ENCODE measurements at regions of chr1 and their contacts with region 1.

Region 1: GRCh38 chr1:155001675-155002463 is 733 bp upstream of the ZBTB7B start:
- DNase-seq: peak; percentile 98
- H3K4me3 ChIP-seq: peak overlapping the region; percentile 71
- H3K27ac ChIP-seq: peak overlapping the region; percentile 92
- H3K4me1 ChIP-seq: peaks cover 65% of the 10 kb centered on the region
- CTCF ChIP-seq: peak; percentile 74

Region 2: GRCh38 chr1:154784924-154785531 is 216.8 kb before region 1 on chr1:
- CTCF ChIA-PET with region 1: no interaction called
- POLR2A ChIA-PET with region 1: no interaction called
- intact Hi-C with region 1: no loop called
- DNase-seq: peak; percentile 54
- H3K4me3 ChIP-seq: no peak overlapping the region
- H3K27ac ChIP-seq: peak overlapping the region; percentile 30
- H3K4me1 ChIP-seq: peaks cover 19% of the 10 kb centered on the region
- CTCF ChIP-seq: no peak

Region 3: GRCh38 chr1:154955718-154956543 is 45.9 kb before region 1 on chr1 and contains the start of gene PBXIP1:
- CTCF ChIA-PET with region 1: interaction called, 11 read pairs
- POLR2A ChIA-PET with region 1: interaction called, 4 read pairs
- intact Hi-C with region 1: loop called (anchors 1 kb)
- DNase-seq: peak; percentile 92
- H3K4me3 ChIP-seq: peak within 1 kb of the TSS; percentile 72
- H3K27ac ChIP-seq: peak within 1 kb of the TSS; percentile 87
- H3K4me1 ChIP-seq: peaks cover 69% of the 10 kb centered on the region
- CTCF ChIP-seq: peak; percentile 65
- total RNA-seq, gene PBXIP1: 23.8 and 26.6 TPM in 2 replicates

Region 4: DNA sequence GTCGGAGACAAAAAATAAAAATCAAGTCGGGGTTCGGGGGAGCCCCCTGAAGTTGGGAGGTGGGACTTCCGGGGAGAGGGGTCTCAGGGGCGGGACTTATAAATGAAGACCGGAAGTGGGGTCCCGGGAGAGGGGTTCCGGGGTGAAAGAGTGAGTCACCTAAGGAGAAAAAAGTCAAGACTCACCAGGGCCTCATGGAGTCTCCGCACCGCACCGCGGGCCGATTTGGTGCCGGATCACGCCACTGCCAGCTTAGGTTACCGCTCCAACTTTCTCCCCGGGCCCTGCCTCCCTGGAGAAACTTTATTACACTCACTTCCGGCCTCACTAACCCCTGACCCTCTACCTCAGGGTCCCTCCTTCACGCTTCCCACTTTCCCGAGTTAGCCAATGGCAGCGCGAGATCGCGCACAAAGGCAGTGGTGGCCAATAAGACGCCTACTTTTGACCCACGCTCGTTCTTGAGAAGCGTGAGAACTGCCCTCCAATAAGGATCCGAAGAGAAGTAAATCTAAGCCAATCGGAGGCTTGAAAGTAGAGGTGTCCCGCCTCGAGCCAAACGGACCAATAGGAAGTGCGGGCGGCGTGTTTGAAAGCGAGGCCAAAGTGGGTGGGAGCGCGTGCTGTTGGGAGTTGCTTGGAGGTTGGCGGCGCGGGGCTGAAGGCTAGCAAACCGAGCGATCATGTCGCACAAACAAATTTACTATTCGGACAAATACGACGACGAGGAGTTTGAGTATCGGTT is 27.6 kb before region 1 on chr1 and contains the start of gene CKS1B:
- CTCF ChIA-PET with region 1: no interaction called
- POLR2A ChIA-PET with region 1: interaction called, 3 read pairs
- intact Hi-C with region 1: loop called (anchors 1 kb)
- DNase-seq: peak; percentile 100
- H3K4me3 ChIP-seq: peak within 1 kb of the TSS; percentile 83
- H3K27ac ChIP-seq: peak within 1 kb of the TSS; percentile 89
- H3K4me1 ChIP-seq: peaks cover 52% of the 10 kb centered on the region
- CTCF ChIP-seq: no peak
- total RNA-seq, gene CKS1B: 149 and 204 TPM in 2 replicates

Region 5: DNA sequence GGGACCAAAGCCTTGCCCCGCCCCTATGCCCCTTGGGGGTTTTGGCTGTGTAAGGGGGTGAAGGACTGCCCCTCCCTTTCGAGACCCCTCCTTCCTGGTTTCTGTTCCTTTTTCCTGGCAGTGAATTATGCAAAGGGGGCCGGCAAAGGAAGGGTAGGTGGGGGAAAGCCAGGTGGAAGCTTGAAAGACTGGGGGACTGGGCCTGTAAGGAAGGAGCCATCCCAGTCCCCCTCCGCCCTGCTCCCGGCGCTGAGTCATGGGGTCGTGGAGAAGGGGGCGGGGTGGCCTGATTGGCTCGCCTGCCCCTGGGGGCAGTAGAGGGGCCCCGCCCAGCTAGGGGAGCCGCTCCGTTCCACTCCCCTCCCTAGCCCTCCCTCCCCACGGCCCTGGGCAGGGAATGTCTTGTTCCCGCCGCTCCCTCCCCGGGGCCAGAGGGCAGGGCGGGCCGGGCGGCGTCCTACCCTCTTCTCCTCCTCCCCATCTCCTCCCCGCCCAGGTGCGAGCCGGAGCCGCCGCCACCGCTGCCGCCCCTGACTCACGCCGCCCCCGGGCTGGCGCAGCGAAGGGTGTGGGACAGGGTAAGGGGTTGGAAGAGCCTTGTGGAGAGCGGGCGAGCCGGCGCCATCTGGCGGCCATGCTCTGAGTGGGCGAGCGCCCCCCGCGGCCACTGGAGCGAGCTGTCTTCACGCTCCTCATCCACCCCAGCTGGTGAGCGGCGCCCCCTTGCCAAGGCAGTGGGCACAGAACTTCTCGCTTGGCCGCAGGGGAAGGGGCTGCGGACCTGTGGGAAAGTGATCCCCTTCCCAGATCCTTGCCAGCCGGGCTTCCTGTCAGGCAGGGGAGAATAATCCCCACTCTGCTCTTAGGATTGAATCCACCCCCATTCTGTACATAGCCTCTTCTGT is 15.4 kb after region 1 on chr1:
- CTCF ChIA-PET with region 1: interaction called, 5 read pairs
- POLR2A ChIA-PET with region 1: interaction called, 10 read pairs
- intact Hi-C with region 1: loop called (anchors 1 kb)
- DNase-seq: peak; percentile 89
- H3K4me3 ChIP-seq: peak overlapping the region; percentile 64
- H3K27ac ChIP-seq: peak overlapping the region; percentile 79
- H3K4me1 ChIP-seq: peaks cover 66% of the 10 kb centered on the region
- CTCF ChIP-seq: peak; percentile 100

Region 6: GRCh38 chr1:155084722-155085503 is 83.0 kb after region 1 on chr1:
- CTCF ChIA-PET with region 1: no interaction called
- POLR2A ChIA-PET with region 1: interaction called, 3 read pairs
- intact Hi-C with region 1: loop called (anchors 1 kb)
- DNase-seq: peak; percentile 94
- H3K4me3 ChIP-seq: peak overlapping the region; percentile 81
- H3K27ac ChIP-seq: peak overlapping the region; percentile 87
- H3K4me1 ChIP-seq: peaks cover 45% of the 10 kb centered on the region
- CTCF ChIP-seq: peak; percentile 87

Region 7: DNA sequence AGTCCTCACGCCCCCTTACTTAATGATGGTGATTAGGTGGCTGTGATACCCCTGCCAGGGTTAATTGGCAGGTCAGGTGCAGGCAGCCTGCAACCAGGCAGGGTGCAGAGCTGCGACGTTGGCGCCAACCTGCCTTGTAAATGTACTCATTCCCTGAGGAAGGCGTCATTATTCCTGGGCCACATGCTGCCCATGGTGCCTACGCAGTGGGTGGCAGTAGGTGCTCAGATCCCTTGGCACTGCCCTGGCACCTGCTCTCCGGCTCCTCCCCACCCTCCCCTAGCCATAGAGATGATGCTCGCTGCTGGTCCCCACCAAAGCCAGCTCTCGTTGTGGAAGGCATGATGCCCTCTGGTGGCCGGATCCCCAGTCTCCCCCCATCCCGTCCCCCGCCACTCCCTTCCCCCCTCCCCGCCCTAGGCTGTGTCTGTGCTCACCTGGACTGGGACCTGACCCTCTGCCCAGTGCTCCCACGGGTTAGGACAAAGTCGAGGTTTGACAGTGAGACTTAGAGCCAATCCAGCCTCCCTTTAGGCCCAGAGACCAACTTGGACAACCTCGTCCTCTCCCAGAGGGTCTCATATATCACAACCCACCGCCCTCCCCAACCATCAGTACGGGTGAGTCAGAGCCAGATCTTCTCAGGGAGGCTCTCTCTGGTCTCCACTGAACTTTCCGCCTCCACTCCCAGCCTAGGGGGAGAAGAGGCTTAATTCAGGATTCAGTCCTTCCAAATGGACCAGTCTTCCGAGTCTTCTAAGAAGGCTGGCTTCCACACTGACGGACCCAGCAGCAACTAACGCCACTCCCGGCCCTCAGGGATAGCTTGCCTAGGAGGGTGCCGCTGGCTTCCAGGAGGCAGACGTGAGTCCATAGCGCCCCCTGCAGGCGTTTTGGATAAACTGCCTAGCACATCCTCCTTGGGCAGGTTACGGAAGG is 165.6 kb after region 1 on chr1:
- CTCF ChIA-PET with region 1: no interaction called
- POLR2A ChIA-PET with region 1: no interaction called
- intact Hi-C with region 1: no loop called
- DNase-seq: peak; percentile 91
- H3K4me3 ChIP-seq: peak overlapping the region; percentile 59
- H3K27ac ChIP-seq: no peak overlapping the region
- H3K4me1 ChIP-seq: peaks cover 23% of the 10 kb centered on the region
- CTCF ChIP-seq: peak; percentile 95